Caco-2 (cell line): ENCODE measurements at regions of chr12 and their contacts with region 1.

Region 1: GRCh38 chr12:23204933-23205778 is 580.2 kb downstream of the ETNK1 start:
- DNase-seq: peak in 1 of 2 experiments; percentile 56
- H3K4me3 ChIP-seq: no peak overlapping the region
- H3K4me3 Mint-ChIP-seq: no peak overlapping the region
- H3K27ac Mint-ChIP-seq: no peak overlapping the region
- H3K4me1 ChIP-seq: no peaks in the 10 kb centered on the region
- H3K4me1 Mint-ChIP-seq: no peaks in the 10 kb centered on the region
- H3K27me3 ChIP-seq: no peaks in the 10 kb centered on the region
- H3K27me3 Mint-ChIP-seq: peaks cover 14% of the 10 kb centered on the region
- CTCF ChIP-seq: peak; percentile 88 to 96

Region 2: GRCh38 chr12:23193552-23193951 is 11.6 kb before region 1 on chr12:
- CTCF ChIA-PET with region 1: no interaction called
- POLR2A ChIA-PET with region 1: no interaction called
- intact Hi-C with region 1: no loop called
- DNase-seq: no peak
- H3K4me3 ChIP-seq: no peak overlapping the region
- H3K4me3 Mint-ChIP-seq: no peak overlapping the region
- H3K27ac Mint-ChIP-seq: no peak overlapping the region
- H3K4me1 ChIP-seq: no peaks in the 10 kb centered on the region
- H3K4me1 Mint-ChIP-seq: no peaks in the 10 kb centered on the region
- H3K27me3 ChIP-seq: no peaks in the 10 kb centered on the region
- H3K27me3 Mint-ChIP-seq: peaks cover 8% of the 10 kb centered on the region
- CTCF ChIP-seq: no peak

Region 3: DNA sequence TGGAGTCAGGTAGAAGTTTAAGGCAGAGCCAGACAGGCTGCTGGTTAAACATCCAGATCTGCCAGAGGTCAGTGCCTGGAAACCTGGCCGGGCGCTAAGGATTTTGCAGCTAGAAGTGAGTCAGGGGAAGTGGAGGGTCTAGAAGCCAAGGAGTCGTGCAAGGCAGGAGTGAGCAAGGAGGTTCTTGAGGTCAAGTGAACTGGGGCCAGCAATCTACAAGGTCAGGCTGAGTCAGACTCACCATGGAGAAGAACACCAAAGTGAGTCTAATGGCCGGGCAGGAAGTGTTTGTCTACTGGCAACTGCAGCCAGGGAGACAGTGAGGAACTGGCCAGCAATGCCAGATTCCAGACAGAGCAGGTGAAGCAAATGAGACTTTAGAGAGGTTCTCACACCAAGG is 48.0 kb after region 1 on chr12:
- CTCF ChIA-PET with region 1: no interaction called
- POLR2A ChIA-PET with region 1: no interaction called
- intact Hi-C with region 1: no loop called
- DNase-seq: no peak
- H3K4me3 ChIP-seq: no peak overlapping the region
- H3K4me3 Mint-ChIP-seq: no peak overlapping the region
- H3K27ac Mint-ChIP-seq: no peak overlapping the region
- H3K4me1 ChIP-seq: no peaks in the 10 kb centered on the region
- H3K4me1 Mint-ChIP-seq: no peaks in the 10 kb centered on the region
- H3K27me3 ChIP-seq: no peaks in the 10 kb centered on the region
- H3K27me3 Mint-ChIP-seq: peaks cover 4% of the 10 kb centered on the region
- CTCF ChIP-seq: no peak

Region 4: DNA sequence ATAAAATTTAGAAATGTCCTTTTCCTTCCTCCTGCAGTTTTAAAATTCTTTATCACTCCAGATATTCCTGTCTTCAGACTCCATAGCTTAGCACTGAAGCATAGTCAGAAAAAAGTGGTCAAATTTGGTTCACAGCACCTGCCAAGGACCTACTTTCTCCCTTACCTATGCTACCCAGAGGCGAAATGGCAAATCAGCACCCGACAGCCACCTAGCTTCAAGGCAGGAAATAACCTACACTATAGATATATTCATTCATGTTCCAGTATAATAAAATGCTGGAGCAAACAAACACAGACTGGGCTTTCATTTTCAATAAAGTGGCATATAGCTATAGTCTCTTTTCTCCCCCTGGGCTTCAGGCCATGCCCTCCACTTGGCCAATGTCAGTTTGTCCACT is 134.6 kb after region 1 on chr12:
- CTCF ChIA-PET with region 1: no interaction called
- POLR2A ChIA-PET with region 1: no interaction called
- intact Hi-C with region 1: loop called (anchors 1 kb)
- DNase-seq: no peak
- H3K4me3 ChIP-seq: no peak overlapping the region
- H3K4me3 Mint-ChIP-seq: no peak overlapping the region
- H3K27ac Mint-ChIP-seq: no peak overlapping the region
- H3K4me1 ChIP-seq: no peaks in the 10 kb centered on the region
- H3K4me1 Mint-ChIP-seq: no peaks in the 10 kb centered on the region
- H3K27me3 ChIP-seq: no peaks in the 10 kb centered on the region; the same call in 1 of the 2 replicates
- H3K27me3 Mint-ChIP-seq: peaks cover 12% of the 10 kb centered on the region
- CTCF ChIP-seq: peak in 1 of 2 experiments; percentile 20

Region 5: DNA sequence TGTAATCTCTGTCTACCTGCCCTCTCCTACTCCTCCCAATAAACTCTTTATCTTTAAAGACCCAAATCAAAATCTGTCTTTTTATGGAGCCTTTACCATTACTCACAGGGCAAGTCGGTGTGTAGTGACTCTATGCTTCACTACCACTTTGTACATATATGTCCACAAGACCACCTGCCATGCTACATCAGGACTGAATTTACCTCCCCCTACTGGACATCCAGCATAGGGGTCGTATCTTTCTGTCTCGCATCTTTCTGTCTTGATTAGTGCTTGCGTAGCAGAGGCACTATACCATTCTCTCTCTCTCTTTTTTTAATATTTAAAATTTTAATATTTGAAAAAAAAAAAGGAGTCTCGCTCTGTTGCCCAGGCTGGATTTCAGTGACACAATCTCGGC is 156.8 kb after region 1 on chr12:
- CTCF ChIA-PET with region 1: no interaction called
- POLR2A ChIA-PET with region 1: no interaction called
- intact Hi-C with region 1: loop called (anchors 5 kb)
- DNase-seq: no peak
- H3K4me3 ChIP-seq: no peak overlapping the region
- H3K4me3 Mint-ChIP-seq: no peak overlapping the region
- H3K27ac Mint-ChIP-seq: no peak overlapping the region
- H3K4me1 ChIP-seq: no peaks in the 10 kb centered on the region
- H3K4me1 Mint-ChIP-seq: no peaks in the 10 kb centered on the region
- H3K27me3 ChIP-seq: no peaks in the 10 kb centered on the region
- H3K27me3 Mint-ChIP-seq: peaks cover 4% of the 10 kb centered on the region
- CTCF ChIP-seq: peak in 1 of 2 experiments; percentile 21

Region 6: DNA sequence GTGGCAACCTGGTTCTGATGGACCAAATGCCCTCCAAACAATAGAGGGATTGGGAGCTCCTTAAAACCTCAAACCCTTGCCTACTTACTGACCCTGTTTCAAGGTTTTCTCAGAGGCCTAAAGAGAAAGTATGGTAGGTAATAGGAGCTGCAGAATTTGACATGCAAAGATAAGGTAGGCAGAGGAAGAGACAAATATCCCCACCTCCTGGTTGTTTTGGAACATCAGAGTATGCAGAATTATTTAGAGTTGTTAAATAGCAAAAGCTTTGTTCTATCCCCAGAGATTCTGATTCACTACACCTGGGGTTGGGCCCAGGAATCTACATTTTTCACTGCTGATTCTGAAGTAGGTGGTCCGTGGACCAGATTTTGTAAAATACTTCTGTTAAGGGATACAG is 323.2 kb after region 1 on chr12:
- CTCF ChIA-PET with region 1: no interaction called
- POLR2A ChIA-PET with region 1: no interaction called
- intact Hi-C with region 1: loop called (anchors 1 kb)
- DNase-seq: no peak
- H3K4me3 ChIP-seq: no peak overlapping the region
- H3K4me3 Mint-ChIP-seq: no peak overlapping the region
- H3K27ac Mint-ChIP-seq: no peak overlapping the region
- H3K4me1 ChIP-seq: no peaks in the 10 kb centered on the region
- H3K4me1 Mint-ChIP-seq: peaks cover 2% of the 10 kb centered on the region
- H3K27me3 ChIP-seq: no peaks in the 10 kb centered on the region
- H3K27me3 Mint-ChIP-seq: peaks cover 3% of the 10 kb centered on the region
- CTCF ChIP-seq: no peak

Region 7: GRCh38 chr12:23906329-23906728 is 701.2 kb after region 1 on chr12:
- CTCF ChIA-PET with region 1: no interaction called
- POLR2A ChIA-PET with region 1: no interaction called
- intact Hi-C with region 1: loop called (anchors 5 kb)
- DNase-seq: no peak
- H3K4me3 ChIP-seq: no peak overlapping the region
- H3K4me3 Mint-ChIP-seq: no peak overlapping the region
- H3K27ac Mint-ChIP-seq: no peak overlapping the region
- H3K4me1 ChIP-seq: no peaks in the 10 kb centered on the region
- H3K4me1 Mint-ChIP-seq: no peaks in the 10 kb centered on the region
- H3K27me3 ChIP-seq: no peaks in the 10 kb centered on the region
- H3K27me3 Mint-ChIP-seq: peaks cover 2% of the 10 kb centered on the region
- CTCF ChIP-seq: no peak

Region 8: DNA sequence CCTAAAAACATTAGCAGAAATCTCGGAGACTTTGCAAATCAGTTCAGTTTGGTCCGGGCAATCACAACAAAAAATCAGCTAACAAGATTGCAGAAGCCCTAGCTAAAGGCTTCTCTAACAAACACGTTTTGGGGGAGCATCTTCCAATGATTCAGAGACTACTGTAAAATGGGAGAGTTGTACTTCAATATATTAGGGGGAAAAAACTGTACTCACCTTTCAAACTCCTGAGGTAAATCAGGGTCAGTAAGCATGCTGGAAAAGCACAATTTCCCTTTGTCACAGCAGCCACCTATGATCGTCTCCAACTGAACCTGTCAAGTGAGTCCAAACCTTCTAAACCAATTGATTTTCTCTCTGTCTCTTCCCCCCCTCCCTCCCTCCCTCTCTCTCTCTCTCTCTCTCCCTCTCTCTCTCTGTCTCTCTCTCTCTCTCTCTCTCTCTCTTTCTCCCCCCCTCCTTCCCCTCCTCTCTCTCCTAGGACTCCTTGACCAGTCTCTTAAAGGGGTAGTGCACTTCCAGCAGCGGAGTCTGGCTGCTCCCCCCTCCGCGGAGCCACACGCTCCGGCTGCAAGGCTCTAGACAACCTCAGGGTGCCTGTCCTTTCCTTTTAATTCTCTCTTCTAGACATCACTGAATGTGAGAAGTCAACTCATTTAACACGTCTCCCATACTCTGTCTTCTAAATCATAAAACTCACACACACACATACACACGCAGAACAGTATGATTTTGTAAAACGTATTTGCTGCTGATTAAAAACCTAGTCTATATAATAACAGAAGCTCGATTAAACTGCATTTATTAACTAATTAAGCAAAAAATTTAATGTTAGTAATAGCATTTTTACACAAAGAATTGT is 744.4 kb after region 1 on chr12 and contains the start of gene SOX5:
- CTCF ChIA-PET with region 1: no interaction called
- POLR2A ChIA-PET with region 1: no interaction called
- intact Hi-C with region 1: loop called (anchors 10 kb)
- DNase-seq: peak; percentile 60 to 61
- H3K4me3 ChIP-seq: peak within 1 kb of the TSS; percentile 48
- H3K4me3 Mint-ChIP-seq: no peak within 1 kb of the TSS
- H3K27ac Mint-ChIP-seq: no peak within 1 kb of the TSS
- H3K4me1 ChIP-seq: no peaks in the 10 kb centered on the region
- H3K4me1 Mint-ChIP-seq: no peaks in the 10 kb centered on the region
- H3K27me3 ChIP-seq: no peaks in the 10 kb centered on the region
- H3K27me3 Mint-ChIP-seq: no peaks in the 10 kb centered on the region
- CTCF ChIP-seq: no peak
- total RNA-seq, gene SOX5: 15.4 and 16.8 TPM in 2 replicates